ENCODE measurements at regions of chr6 and their contacts with region 1.

Region 1: GRCh38 chr6:43575772-43576551 is at the starts of genes POLH and XPO5:
- DNase-seq: peak; percentile 80 to 93 (median 86)
- H3K4me3 ChIP-seq: peak within 1 kb of the TSS; percentile 67 to 100 (median 93)
- H3K27ac ChIP-seq: peak within 1 kb of the TSS in 54 of 59 donors; percentile 1 to 86 (median 66)
- H3K27me3 ChIP-seq: no peaks in the 10 kb centered on the region
- CTCF ChIP-seq: peak in 39 of 56 donors; percentile 10 to 59 (median 31)
- total RNA-seq, gene POLH: 6.2 to 24.4 (median 11.6) TPM
- total RNA-seq, gene XPO5: 25.5 to 71.5 (median 43.3) TPM

Region 2: GRCh38 chr6:43325876-43326275 is 250.1 kb before region 1 on chr6:
- intact Hi-C with region 1: no loop called
- DNase-seq: no peak
- H3K4me3 ChIP-seq: no peak overlapping the region
- H3K27ac ChIP-seq: no peak overlapping the region
- H3K27me3 ChIP-seq: no peaks in the 10 kb centered on the region
- CTCF ChIP-seq: no peak

Region 3: GRCh38 chr6:43516697-43517504 is 59.1 kb before region 1 on chr6 and contains the starts of genes POLR1C and YIPF3:
- intact Hi-C with region 1: loop called in 1 of 2 experiments (anchors 5 kb)
- DNase-seq: peak; percentile 96 to 99 (median 98)
- H3K4me3 ChIP-seq: peak within 1 kb of the TSS; percentile 66 to 100 (median 92)
- H3K27ac ChIP-seq: peak within 1 kb of the TSS; percentile 10 to 96 (median 88)
- H3K27me3 ChIP-seq: no peaks in the 10 kb centered on the region
- CTCF ChIP-seq: peak in 21 of 56 donors; percentile 9 to 56 (median 27)
- total RNA-seq, gene POLR1C: 13.6 to 34.4 (median 23.6) TPM
- total RNA-seq, gene YIPF3: 57.9 to 94.9 (median 76.6) TPM

Region 4: GRCh38 chr6:43629505-43630300 is 53.7 kb after region 1 on chr6:
- intact Hi-C with region 1: loop called (anchors 5 kb)
- DNase-seq: peak; percentile 61 to 93 (median 90)
- H3K4me3 ChIP-seq: peak overlapping the region; percentile 64 to 99 (median 94)
- H3K27ac ChIP-seq: peak overlapping the region; percentile 74 to 100 (median 97)
- H3K27me3 ChIP-seq: no peaks in the 10 kb centered on the region
- CTCF ChIP-seq: peak in 5 of 56 donors; percentile 0 to 9 (median 2)